OCI-LY7 (cell line): ENCODE measurements at regions of chr10 and their contacts with region 1.

Region 1: GRCh38 chr10:99560277-99561126 is 27.8 kb downstream of the NKX2-3 start:
- DNase-seq: peak; percentile 58
- H3K4me3 ChIP-seq: no peak overlapping the region
- H3K27ac ChIP-seq: no peak overlapping the region
- H3K4me1 ChIP-seq: peaks cover 21% of the 10 kb centered on the region
- CTCF ChIP-seq: peak; percentile 96

Region 2: GRCh38 chr10:99435986-99436638 is 124.4 kb before region 1 on chr10:
- CTCF ChIA-PET with region 1: interaction called, 4 read pairs
- POLR2A ChIA-PET with region 1: no interaction called
- intact Hi-C with region 1: loop called (anchors 5 kb)
- DNase-seq: peak; percentile 61
- H3K4me3 ChIP-seq: no peak overlapping the region
- H3K27ac ChIP-seq: no peak overlapping the region
- H3K4me1 ChIP-seq: peaks cover 9% of the 10 kb centered on the region
- CTCF ChIP-seq: peak; percentile 89

Region 3: DNA sequence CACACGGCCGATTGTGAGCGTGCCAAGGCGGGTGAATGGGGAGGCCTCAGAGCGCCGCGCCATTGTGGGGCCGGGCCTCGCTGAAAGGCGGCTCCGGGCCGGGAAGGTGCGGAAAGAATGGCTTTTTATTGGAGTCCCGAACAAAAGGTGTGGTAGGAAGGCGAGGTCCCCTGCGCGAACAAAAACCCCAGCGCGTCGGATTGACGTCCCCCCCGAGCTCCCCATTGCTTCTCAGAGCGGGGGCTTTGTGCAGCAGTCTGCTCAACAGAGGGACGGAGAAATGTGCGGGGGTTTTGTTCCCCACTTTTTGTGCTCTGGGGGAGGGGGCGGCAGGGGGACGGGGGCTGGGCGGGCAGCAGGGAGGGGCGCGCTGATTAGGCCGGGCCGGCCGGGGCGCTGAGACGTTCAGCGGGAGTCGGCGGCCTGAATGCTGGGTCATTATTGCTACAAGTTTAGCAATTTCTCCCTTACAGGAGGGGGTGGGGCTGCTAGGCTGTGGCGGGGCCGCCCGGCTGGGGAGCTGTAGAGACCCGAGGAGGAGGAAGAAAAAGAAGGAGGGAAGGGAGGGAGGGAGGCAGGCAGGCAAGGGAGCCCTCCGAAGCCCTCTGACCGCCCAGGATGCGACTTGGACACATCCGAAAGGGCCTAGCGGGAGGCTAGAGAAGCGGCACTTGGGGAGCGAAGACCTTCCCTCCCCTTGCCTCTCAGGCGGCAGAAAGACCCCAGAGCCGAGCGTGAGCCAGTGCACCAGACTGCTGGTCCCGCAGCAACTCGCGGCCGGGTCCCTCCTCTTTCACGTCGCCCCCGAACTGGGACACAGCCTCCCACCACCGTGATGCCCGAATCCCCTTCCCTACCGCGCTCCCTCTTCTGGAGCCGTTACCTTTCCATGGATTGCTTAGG is 23.2 kb before region 1 on chr10:
- CTCF ChIA-PET with region 1: no interaction called
- POLR2A ChIA-PET with region 1: no interaction called
- intact Hi-C with region 1: no loop called
- DNase-seq: no peak
- H3K4me3 ChIP-seq: no peak overlapping the region
- H3K27ac ChIP-seq: no peak overlapping the region
- H3K4me1 ChIP-seq: no peaks in the 10 kb centered on the region
- CTCF ChIP-seq: no peak

Region 4: DNA sequence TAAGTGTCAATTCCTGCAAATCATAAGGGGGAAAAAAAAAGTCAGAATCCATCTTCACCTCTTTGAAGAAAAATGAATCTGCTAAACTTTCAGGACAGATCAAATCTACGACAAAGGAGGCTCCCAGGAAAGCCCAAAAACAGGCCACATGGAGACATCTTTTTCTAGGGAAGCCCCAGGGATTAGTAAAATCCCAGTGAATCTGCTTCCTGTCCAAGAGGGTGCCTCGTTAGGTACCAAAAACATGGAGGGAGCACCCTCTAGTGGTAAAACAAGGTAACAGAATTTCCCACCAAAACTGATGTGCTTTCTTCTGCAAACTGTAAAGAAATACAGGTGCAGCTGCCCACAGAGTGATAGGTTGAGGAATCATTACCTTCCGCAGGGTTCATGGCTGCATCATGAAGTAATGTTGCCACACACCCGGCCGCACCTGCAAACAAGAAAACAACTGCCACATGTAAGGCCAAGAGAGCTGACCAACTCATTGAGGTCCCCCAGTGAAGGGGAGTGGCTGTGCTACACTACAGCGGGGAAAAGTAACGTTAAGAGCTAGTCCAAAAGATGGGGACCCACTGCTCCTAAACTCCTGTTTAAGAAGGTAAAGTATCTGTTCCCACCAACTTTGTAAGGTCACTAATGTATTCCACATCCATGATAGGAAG is 51.8 kb after region 1 on chr10:
- CTCF ChIA-PET with region 1: interaction called, 5 read pairs
- POLR2A ChIA-PET with region 1: interaction called, 5 read pairs
- intact Hi-C with region 1: loop called (anchors 1 kb)
- DNase-seq: peak; percentile 66
- H3K4me3 ChIP-seq: no peak overlapping the region
- H3K27ac ChIP-seq: no peak overlapping the region
- H3K4me1 ChIP-seq: no peaks in the 10 kb centered on the region
- CTCF ChIP-seq: peak; percentile 95

Region 5: GRCh38 chr10:99698504-99699080 is 138.1 kb after region 1 on chr10:
- CTCF ChIA-PET with region 1: no interaction called
- POLR2A ChIA-PET with region 1: no interaction called
- intact Hi-C with region 1: no loop called
- DNase-seq: no peak
- H3K4me3 ChIP-seq: no peak overlapping the region
- H3K27ac ChIP-seq: no peak overlapping the region
- H3K4me1 ChIP-seq: no peaks in the 10 kb centered on the region
- CTCF ChIP-seq: peak; percentile 55

Region 6: GRCh38 chr10:99711129-99711719 is 150.7 kb after region 1 on chr10:
- CTCF ChIA-PET with region 1: no interaction called
- POLR2A ChIA-PET with region 1: no interaction called
- intact Hi-C with region 1: loop called (anchors 5 kb)
- DNase-seq: peak; percentile 62
- H3K4me3 ChIP-seq: no peak overlapping the region
- H3K27ac ChIP-seq: no peak overlapping the region
- H3K4me1 ChIP-seq: no peaks in the 10 kb centered on the region
- CTCF ChIP-seq: peak; percentile 86